ENCODE measurements at regions of chr5 and their contacts with region 1.

Region 1: GRCh38 chr5:180470966-180471582 is 23.1 kb upstream of the CNOT6 start:
- DNase-seq: peak; percentile 66
- ATAC-seq: peak; percentile 69
- H3K4me3 ChIP-seq: no peak overlapping the region
- H3K27ac ChIP-seq: no peak overlapping the region
- H3K4me1 ChIP-seq: no peaks in the 10 kb centered on the region
- H3K27me3 ChIP-seq: no peaks in the 10 kb centered on the region
- CTCF ChIP-seq: peak; percentile 93

Region 2: GRCh38 chr5:180291943-180292831 is 178.9 kb before region 1 on chr5 and contains the start of gene MAPK9:
- intact Hi-C with region 1: loop called (anchors 5 kb)
- DNase-seq: peak; percentile 94
- ATAC-seq: peak; percentile 91
- H3K4me3 ChIP-seq: peak within 1 kb of the TSS; percentile 99
- H3K27ac ChIP-seq: peak within 1 kb of the TSS; percentile 89
- H3K4me1 ChIP-seq: peaks cover 17% of the 10 kb centered on the region
- H3K27me3 ChIP-seq: no peaks in the 10 kb centered on the region
- CTCF ChIP-seq: no peak
- total RNA-seq, gene MAPK9: 39.5 TPM

Region 3: GRCh38 chr5:181043285-181044092 is 572.4 kb after region 1 on chr5:
- intact Hi-C with region 1: no loop called
- DNase-seq: no peak
- ATAC-seq: peak; percentile 27
- H3K4me3 ChIP-seq: no peak overlapping the region
- H3K27ac ChIP-seq: peak overlapping the region; percentile 60
- H3K4me1 ChIP-seq: no peaks in the 10 kb centered on the region
- H3K27me3 ChIP-seq: peaks cover 21% of the 10 kb centered on the region
- CTCF ChIP-seq: peak; percentile 8

Measured in upper lobe of right lung (tissue), 1 donor.